ENCODE measurements at regions of chr16 and their contacts with region 1.

Region 1: GRCh38 chr16:46871587-46871986 is 12.6 kb upstream of the GPT2 start:
- DNase-seq: no peak
- H3K4me3 Mint-ChIP-seq: no peak overlapping the region
- H3K27ac Mint-ChIP-seq: no peak overlapping the region
- H3K4me1 Mint-ChIP-seq: peaks cover 15% of the 10 kb centered on the region
- H3K27me3 Mint-ChIP-seq: no peaks in the 10 kb centered on the region
- CTCF ChIP-seq: no peak

Region 2: GRCh38 chr16:46658925-46659324 is 212.7 kb before region 1 on chr16:
- CTCF ChIA-PET with region 1: no interaction called
- intact Hi-C with region 1: no loop called
- DNase-seq: no peak
- H3K4me3 Mint-ChIP-seq: no peak overlapping the region
- H3K27ac Mint-ChIP-seq: no peak overlapping the region
- H3K4me1 Mint-ChIP-seq: no peaks in the 10 kb centered on the region
- H3K27me3 Mint-ChIP-seq: no peaks in the 10 kb centered on the region
- CTCF ChIP-seq: no peak

Region 3: DNA sequence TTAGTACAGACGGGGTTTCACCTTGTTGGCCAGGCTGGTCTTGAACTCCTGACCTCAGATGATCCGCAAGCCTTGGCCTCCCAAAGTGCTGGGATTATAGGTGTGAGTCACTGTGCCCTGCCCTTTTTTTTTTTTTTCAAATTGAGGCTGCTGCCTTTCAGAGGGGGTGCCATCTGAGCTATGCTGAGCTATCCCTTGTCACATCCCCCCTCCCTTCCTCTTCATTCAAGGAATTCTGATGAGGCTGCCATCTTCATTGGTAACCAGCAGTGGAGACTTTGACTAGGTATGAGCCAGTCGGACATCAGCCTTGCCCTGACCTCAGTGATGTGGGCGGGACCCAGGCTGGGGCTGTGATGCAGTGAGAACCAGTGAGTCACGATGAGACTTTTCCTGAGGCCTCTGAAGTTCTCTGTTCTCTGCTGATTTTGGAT is 11.9 kb before region 1 on chr16:
- CTCF ChIA-PET with region 1: interaction called, 11 read pairs
- intact Hi-C with region 1: no loop called
- DNase-seq: peak; percentile 84
- H3K4me3 Mint-ChIP-seq: no peak overlapping the region
- H3K27ac Mint-ChIP-seq: peak overlapping the region; percentile 67
- H3K4me1 Mint-ChIP-seq: peaks cover 57% of the 10 kb centered on the region
- H3K27me3 Mint-ChIP-seq: no peaks in the 10 kb centered on the region
- CTCF ChIP-seq: no peak

Region 4: DNA sequence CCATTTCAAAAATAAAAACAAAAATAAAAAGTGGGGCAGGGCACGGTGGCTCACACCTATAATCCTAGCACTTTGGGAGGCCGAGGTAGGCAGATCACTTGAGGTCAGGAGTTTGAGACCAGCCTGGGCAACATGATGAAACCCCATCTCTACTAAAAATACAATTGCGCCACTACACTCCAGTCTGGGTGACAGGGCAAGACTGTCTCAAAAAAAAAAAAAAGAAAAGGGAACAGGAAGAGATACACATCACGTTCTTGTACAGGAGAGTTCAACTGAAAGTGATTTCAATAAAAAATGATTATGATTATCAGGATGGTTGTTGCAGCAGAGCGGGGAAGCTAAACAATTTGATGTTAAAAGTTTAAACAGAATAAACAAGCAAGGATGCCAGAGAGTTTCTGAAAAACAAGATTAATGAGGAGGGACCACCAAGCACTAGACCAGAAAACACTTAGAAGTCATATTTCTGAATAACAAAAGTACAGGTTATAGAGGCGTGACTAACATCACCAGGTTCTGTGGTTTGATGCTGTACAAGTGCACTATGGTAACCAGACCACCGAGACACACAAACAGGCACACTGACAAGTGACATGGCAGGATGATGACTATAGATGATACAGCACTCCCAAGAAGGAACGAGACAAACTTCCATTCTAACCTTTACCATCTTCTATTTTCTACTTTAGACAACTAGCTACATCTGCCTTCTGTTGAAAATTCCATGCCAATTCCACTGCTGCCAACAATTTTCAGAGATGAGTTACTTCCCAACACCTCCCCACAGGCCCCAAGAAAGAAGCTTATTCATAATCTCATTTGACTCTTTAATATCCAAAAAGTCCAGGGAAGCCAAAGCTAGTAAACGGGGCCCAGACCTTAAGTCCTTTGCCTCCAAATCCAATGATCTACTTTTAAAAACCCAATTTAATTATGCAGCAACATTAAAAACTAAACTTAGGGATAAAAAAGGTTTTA is 90.1 kb after region 1 on chr16:
- CTCF ChIA-PET with region 1: no interaction called
- intact Hi-C with region 1: no loop called
- DNase-seq: no peak
- H3K4me3 Mint-ChIP-seq: no peak overlapping the region
- H3K27ac Mint-ChIP-seq: no peak overlapping the region
- H3K4me1 Mint-ChIP-seq: no peaks in the 10 kb centered on the region
- H3K27me3 Mint-ChIP-seq: no peaks in the 10 kb centered on the region
- CTCF ChIP-seq: no peak

Region 5: GRCh38 chr16:47073223-47074155 is 201.9 kb after region 1 on chr16:
- CTCF ChIA-PET with region 1: no interaction called
- intact Hi-C with region 1: no loop called
- DNase-seq: no peak
- H3K4me3 Mint-ChIP-seq: no peak overlapping the region
- H3K27ac Mint-ChIP-seq: no peak overlapping the region
- H3K4me1 Mint-ChIP-seq: no peaks in the 10 kb centered on the region
- H3K27me3 Mint-ChIP-seq: no peaks in the 10 kb centered on the region
- CTCF ChIP-seq: no peak